H1 (cell line): ENCODE measurements at regions of chr16 and their contacts with region 1.

Region 1: DNA sequence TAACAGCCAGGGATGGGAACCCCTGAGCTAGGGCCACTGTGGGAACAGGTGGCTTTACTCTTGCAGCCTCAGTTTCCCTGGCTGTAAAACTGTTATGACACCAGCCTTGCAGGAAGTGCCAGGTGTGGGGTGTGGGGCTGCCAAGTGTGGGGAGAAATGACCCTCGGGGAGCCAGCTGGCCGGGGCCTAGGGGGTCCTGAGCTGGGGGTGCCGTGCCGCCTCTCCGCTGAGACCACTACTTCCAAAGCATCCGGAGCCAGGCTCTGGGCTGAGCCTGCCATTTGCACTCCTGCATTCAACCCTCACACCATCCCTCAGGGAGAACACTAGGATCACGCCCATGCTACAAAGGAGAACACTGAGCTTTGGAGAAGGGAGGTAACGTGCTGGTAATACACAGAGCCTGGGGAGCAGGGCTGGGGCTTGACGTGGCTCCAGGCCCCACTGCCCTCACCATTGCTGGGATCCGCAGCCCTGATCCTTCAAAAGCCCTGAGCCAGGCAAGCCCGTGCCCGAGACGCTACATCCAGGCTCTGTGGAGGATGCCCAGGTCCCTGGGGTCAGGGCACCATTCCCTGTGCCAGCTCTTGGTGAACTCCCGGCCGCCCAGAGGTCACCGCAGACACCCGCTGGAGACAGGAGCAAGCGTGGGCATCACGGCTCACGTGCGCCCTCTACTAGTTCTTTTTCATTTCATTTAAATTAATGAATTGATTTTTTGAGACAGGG is 28.8 kb upstream of the GINS2 start:
- DNase-seq: peak in 1 of 2 experiments; percentile 84
- H3K4me3 ChIP-seq: no peak overlapping the region
- H3K27ac ChIP-seq: no peak overlapping the region
- H3K4me1 ChIP-seq: peaks cover 0 to 10% (median 7%) of the 10 kb centered on the region in 4 experiments; a peak in 6 of 7 replicates
- H3K27me3 ChIP-seq: peaks cover 0 to 7% (median 2%) of the 10 kb centered on the region in 4 experiments; a peak in 3 of 7 replicates
- CTCF ChIP-seq: peak; percentile 57 to 89 (median 69)
- EP300 ChIP-seq: no peak
- POLR2A ChIP-seq: no peak
- RAD21 ChIP-seq: peak; percentile 81 to 86

Region 2: DNA sequence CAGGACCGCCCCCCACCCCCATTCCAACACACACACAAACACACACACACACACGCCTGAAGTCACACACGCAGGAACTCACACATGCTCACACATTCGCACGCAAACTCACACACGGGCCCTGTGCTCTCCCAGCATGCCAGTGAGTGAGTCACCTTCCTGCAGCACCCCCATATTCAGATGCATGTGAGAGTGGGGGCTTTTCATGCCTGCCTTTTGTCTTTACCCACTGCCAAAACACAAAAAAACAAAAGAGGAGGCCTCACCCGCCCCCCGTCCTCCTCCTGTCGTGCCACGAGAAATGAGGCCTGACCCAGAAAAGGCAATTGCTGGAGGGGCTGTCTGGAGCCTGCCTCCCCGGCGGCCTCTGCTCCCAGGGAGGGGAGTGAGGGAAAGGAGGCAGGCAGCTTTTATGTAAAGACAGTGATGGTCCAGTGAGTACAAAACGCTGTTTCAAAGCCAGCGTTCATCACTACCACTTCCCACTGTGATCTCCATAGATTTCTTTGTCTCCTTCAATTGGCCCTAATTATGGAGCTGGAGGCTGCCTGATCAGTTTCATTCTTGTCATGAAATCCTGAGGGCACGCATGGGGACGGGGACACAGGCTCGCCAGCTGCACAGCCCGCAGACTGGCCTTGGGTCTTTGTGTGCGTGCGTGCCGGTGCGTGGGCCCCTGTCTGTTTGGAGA is 133.9 kb before region 1 on chr16:
- CTCF ChIA-PET with region 1: no interaction called
- POLR2A ChIA-PET with region 1: no interaction called
- DNase-seq: peak in 1 of 2 experiments; percentile 51
- H3K4me3 ChIP-seq: peak overlapping the region in 2 of 4 experiments; percentile 14 to 31; a peak in 4 of 8 replicates
- H3K27ac ChIP-seq: no peak overlapping the region
- H3K4me1 ChIP-seq: peaks cover 32 to 84% (median 78%) of the 10 kb centered on the region in 4 experiments
- H3K27me3 ChIP-seq: peaks cover 0 to 32% (median 24%) of the 10 kb centered on the region in 4 experiments; a peak in 5 of 7 replicates
- CTCF ChIP-seq: no peak
- EP300 ChIP-seq: no peak
- POLR2A ChIP-seq: 0 out of 3 replicates have a peak, but pooled peaks of 1 of the 2 experiments have one; percentile 19
- RAD21 ChIP-seq: no peak

Region 3: GRCh38 chr16:85659805-85660495 is 57.6 kb before region 1 on chr16:
- CTCF ChIA-PET with region 1: interaction called, 117 read pairs
- POLR2A ChIA-PET with region 1: no interaction called
- DNase-seq: peak; percentile 57 to 98
- H3K4me3 ChIP-seq: no peak overlapping the region
- H3K27ac ChIP-seq: no peak overlapping the region
- H3K4me1 ChIP-seq: no peaks in the 10 kb centered on the region; a peak in 1 of 7 replicates
- H3K27me3 ChIP-seq: no peaks in the 10 kb centered on the region
- CTCF ChIP-seq: peak; percentile 91 to 98 (median 97)
- EP300 ChIP-seq: no peak
- POLR2A ChIP-seq: no peak
- RAD21 ChIP-seq: peak; percentile 68 to 82

Region 4: DNA sequence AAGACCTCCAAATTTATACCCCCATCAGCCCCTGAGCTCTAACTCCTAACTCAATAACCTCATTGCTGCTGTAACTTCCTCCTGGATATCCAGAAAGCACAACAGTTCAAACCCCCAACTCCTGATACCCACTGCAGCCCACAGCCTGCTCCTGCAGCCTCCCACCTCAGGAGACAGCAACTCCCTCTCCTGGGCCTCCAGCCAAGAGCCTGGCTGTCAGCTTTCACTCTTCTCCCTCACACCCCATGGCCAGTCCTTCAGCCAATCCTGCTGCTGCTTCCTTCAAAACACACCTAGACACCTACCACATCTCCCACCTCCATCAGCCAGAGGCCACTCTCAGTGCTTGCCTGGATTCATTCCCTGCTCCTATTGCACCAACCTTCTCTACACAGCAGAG is 34.2 kb before region 1 on chr16:
- CTCF ChIA-PET with region 1: interaction called, 620 read pairs
- POLR2A ChIA-PET with region 1: interaction called, 14 read pairs
- DNase-seq: no peak
- H3K4me3 ChIP-seq: no peak overlapping the region
- H3K27ac ChIP-seq: no peak overlapping the region
- H3K4me1 ChIP-seq: peaks cover 0 to 5% (median 0%) of the 10 kb centered on the region in 4 experiments; a peak in 1 of 7 replicates
- H3K27me3 ChIP-seq: no peaks in the 10 kb centered on the region
- CTCF ChIP-seq: no peak
- EP300 ChIP-seq: no peak
- POLR2A ChIP-seq: no peak
- RAD21 ChIP-seq: no peak

Region 5: DNA sequence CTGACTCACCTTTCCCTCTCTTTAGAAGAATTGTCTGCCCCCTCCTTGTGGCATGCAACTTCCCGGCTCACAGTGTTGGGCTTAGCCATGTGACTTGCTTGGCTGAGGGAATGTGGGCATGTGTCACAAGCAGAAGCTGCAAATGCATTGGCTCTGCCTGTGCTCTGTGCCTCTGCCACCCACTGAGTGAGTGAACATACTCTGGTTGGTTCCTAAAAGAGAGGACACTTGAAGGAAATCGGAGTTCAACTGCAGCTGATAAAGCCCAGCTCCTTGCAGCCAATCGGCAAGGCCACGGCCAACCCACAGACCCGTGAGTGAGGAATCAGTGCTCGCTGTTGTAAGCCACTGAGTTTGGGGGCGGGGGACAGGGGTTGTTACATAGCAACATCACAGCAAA is 17.9 kb before region 1 on chr16:
- CTCF ChIA-PET with region 1: interaction called, 620 read pairs
- POLR2A ChIA-PET with region 1: interaction called, 12 read pairs
- DNase-seq: no peak
- H3K4me3 ChIP-seq: no peak overlapping the region
- H3K27ac ChIP-seq: no peak overlapping the region
- H3K4me1 ChIP-seq: peaks cover 0 to 6% (median 2%) of the 10 kb centered on the region in 4 experiments; a peak in 3 of 7 replicates
- H3K27me3 ChIP-seq: no peaks in the 10 kb centered on the region
- CTCF ChIP-seq: no peak
- EP300 ChIP-seq: no peak
- POLR2A ChIP-seq: no peak
- RAD21 ChIP-seq: no peak

Region 6: GRCh38 chr16:85735225-85735635 is 17.7 kb after region 1 on chr16:
- CTCF ChIA-PET with region 1: interaction called, 18 read pairs
- POLR2A ChIA-PET with region 1: interaction called, 8 read pairs
- DNase-seq: no peak
- H3K4me3 ChIP-seq: no peak overlapping the region
- H3K27ac ChIP-seq: no peak overlapping the region
- H3K4me1 ChIP-seq: peaks cover 3 to 10% (median 9%) of the 10 kb centered on the region in 4 experiments
- H3K27me3 ChIP-seq: no peaks in the 10 kb centered on the region; a peak in 1 of 7 replicates
- CTCF ChIP-seq: no peak
- EP300 ChIP-seq: no peak
- POLR2A ChIP-seq: no peak
- RAD21 ChIP-seq: no peak